ENCODE measurements at regions of chr6 and their contacts with region 1.

Region 1: GRCh38 chr6:70221025-70221714 is 81.7 kb downstream of the COL9A1 start:
- DNase-seq: peak; percentile 13
- ATAC-seq: no peak
- H3K4me3 ChIP-seq: no peak overlapping the region
- H3K27ac ChIP-seq: no peak overlapping the region
- H3K4me1 ChIP-seq: no peaks in the 10 kb centered on the region
- H3K27me3 ChIP-seq: peaks cover 23% of the 10 kb centered on the region
- CTCF ChIP-seq: peak; percentile 77; the same call in 1 of the 2 replicates

Region 2: DNA sequence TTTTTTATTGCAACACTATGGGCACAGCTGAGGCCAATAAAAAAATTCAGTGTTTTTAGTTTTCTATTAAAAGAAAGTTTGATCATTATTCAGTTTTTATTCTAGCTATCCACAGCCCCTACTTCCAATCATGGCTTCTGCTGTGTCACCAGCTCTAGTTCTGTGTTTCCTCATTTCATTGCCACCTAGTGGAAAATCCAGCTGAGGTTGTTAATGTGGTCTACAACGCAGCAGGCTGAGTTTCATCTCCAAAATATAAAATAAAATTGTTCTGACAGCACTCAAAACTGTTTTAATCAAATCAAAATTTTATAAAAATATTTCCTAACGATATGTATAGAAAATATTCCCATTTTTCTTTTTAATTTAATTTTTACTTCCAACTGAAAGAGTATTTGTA is 68.1 kb after region 1 on chr6:
- CTCF ChIA-PET with region 1: interaction called, 4 read pairs
- POLR2A ChIA-PET with region 1: no interaction called
- in situ Hi-C with region 1: no loop called
- intact Hi-C with region 1: loop called (anchors 5 kb)
- DNase-seq: no peak
- ATAC-seq: no peak
- H3K4me3 ChIP-seq: no peak overlapping the region
- H3K27ac ChIP-seq: no peak overlapping the region
- H3K4me1 ChIP-seq: no peaks in the 10 kb centered on the region
- H3K27me3 ChIP-seq: peaks cover 43% of the 10 kb centered on the region
- CTCF ChIP-seq: peak; percentile 35; the same call in 1 of the 2 replicates

Region 3: GRCh38 chr6:70304616-70305015 is 83.4 kb after region 1 on chr6:
- CTCF ChIA-PET with region 1: interaction called, 13 read pairs
- POLR2A ChIA-PET with region 1: no interaction called
- in situ Hi-C with region 1: no loop called
- intact Hi-C with region 1: loop called (anchors 5 kb)
- DNase-seq: no peak
- ATAC-seq: no peak
- H3K4me3 ChIP-seq: no peak overlapping the region
- H3K27ac ChIP-seq: no peak overlapping the region
- H3K4me1 ChIP-seq: no peaks in the 10 kb centered on the region
- H3K27me3 ChIP-seq: peaks cover 10% of the 10 kb centered on the region
- CTCF ChIP-seq: no peak

Region 4: GRCh38 chr6:70310063-70310694 is 89.0 kb after region 1 on chr6:
- CTCF ChIA-PET with region 1: interaction called, 13 read pairs
- POLR2A ChIA-PET with region 1: no interaction called
- in situ Hi-C with region 1: no loop called
- intact Hi-C with region 1: loop called (anchors 5 kb)
- DNase-seq: peak; percentile 33
- ATAC-seq: no peak
- H3K4me3 ChIP-seq: no peak overlapping the region
- H3K27ac ChIP-seq: no peak overlapping the region
- H3K4me1 ChIP-seq: 0 out of 2 replicates have a peak, but pooled peaks cover 3% of the 10 kb centered on the region
- H3K27me3 ChIP-seq: peaks cover 10% of the 10 kb centered on the region
- CTCF ChIP-seq: peak; percentile 72; the same call in 1 of the 2 replicates

Region 5: DNA sequence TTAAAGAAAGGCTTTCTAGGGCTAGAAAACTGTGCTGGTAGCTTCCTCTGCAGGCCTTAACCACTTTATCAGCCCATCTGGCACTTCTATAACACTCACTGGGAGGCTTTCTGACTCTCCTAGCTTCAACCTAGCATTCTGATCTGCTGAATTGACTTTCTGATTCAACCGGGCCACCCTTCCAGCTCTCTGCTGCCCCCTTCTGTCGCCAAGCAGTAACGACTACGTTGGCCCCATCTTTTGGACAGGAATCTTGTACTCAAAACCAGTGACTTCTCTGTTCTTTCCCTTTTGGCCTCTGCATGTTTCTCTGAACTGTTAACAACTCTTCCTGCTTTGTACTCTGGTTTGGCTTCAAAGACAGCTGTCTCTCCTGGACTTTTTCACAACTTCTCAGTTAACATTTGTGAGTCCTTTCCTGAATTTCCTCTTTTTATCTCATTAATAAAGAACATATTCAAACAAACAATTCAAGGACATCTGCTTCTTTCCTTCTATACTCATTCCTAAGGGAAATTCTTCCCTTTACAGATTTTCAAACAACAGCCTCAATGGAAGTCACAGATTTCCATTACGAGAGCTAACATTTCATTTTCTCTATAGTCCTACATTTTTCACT is 148.3 kb after region 1 on chr6:
- CTCF ChIA-PET with region 1: interaction called, 17 read pairs
- POLR2A ChIA-PET with region 1: no interaction called
- in situ Hi-C with region 1: no loop called
- intact Hi-C with region 1: loop called (anchors 1 kb)
- DNase-seq: peak; percentile 67
- ATAC-seq: peak; percentile 93
- H3K4me3 ChIP-seq: no peak overlapping the region
- H3K27ac ChIP-seq: no peak overlapping the region
- H3K4me1 ChIP-seq: no peaks in the 10 kb centered on the region
- H3K27me3 ChIP-seq: peaks cover 14% of the 10 kb centered on the region; the same call in 1 of the 2 replicates
- CTCF ChIP-seq: peak; percentile 98

Region 6: DNA sequence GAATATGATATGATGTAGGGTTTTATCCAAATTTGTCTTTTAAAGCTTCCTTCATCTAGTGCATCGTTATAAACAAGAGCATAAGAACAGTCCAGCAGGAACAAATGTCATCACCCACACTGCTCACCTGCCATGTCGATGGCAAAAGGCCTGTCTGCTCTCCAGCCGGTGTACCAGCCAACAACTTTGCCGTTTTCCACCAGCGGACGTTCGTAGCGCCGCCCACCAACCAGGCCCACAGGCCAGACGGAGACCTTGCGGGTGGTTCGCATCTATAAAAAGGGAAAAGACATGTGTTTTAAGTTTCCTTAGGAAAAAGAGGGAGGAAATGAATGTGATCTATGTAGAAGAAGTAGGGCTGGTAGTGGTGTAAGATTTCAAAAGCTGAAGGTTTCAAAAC is 672.8 kb after region 1 on chr6:
- CTCF ChIA-PET with region 1: no interaction called
- POLR2A ChIA-PET with region 1: no interaction called
- in situ Hi-C with region 1: no loop called
- intact Hi-C with region 1: loop called (anchors 10 kb)
- DNase-seq: no peak
- ATAC-seq: no peak
- H3K4me3 ChIP-seq: no peak overlapping the region
- H3K27ac ChIP-seq: no peak overlapping the region
- H3K4me1 ChIP-seq: no peaks in the 10 kb centered on the region
- H3K27me3 ChIP-seq: peaks cover 13% of the 10 kb centered on the region; the same call in 1 of the 2 replicates
- CTCF ChIP-seq: no peak

Region 7: GRCh38 chr6:70955441-70956190 is 734.4 kb after region 1 on chr6:
- CTCF ChIA-PET with region 1: interaction called, 13 read pairs
- POLR2A ChIA-PET with region 1: no interaction called
- in situ Hi-C with region 1: no loop called
- intact Hi-C with region 1: loop called (anchors 5 kb)
- DNase-seq: peak; percentile 2
- ATAC-seq: peak; percentile 96
- H3K4me3 ChIP-seq: peak overlapping the region; percentile 47 to 53
- H3K27ac ChIP-seq: no peak overlapping the region
- H3K4me1 ChIP-seq: peaks cover 6% of the 10 kb centered on the region
- H3K27me3 ChIP-seq: peaks cover 58% of the 10 kb centered on the region
- CTCF ChIP-seq: peak; percentile 99

Measured in Panc1 (cell line).